ENCODE measurements at regions of chr1 and their contacts with region 1.

Region 1: DNA sequence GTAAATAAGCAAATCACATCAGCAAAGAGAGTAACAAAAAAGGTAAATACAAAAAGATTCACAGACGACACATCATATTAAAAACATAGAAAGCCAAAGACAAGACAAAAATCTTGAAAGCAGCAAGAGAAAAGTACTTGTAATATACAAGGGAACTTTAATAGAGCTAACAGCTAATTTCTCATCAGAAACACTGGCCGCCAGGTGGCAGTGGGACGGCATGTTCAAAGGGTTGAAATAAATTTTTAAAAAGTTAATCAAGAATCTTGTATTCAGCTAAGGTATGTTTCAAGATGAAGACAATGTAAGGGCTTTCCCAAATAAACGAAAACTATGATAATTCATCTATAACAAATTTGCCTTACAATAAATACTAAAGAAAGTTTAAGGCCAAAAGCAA is 358.1 kb downstream of the LRRIQ3 start:
- DNase-seq: no peak
- ATAC-seq: peak; percentile 32; the same call in 1 of the 3 replicates
- H3K4me3 ChIP-seq: no peak overlapping the region
- H3K27ac ChIP-seq: no peak overlapping the region
- H3K4me1 ChIP-seq: no peaks in the 10 kb centered on the region
- H3K27me3 ChIP-seq: no peaks in the 10 kb centered on the region
- CTCF ChIP-seq: peak; percentile 23 to 51 (median 35); a peak in 5 of 6 replicates
- EP300 ChIP-seq: no peak
- POLR2A ChIP-seq: no peak
- RAD21 ChIP-seq: peak; percentile 48; the same call in 1 of the 2 replicates

Region 2: DNA sequence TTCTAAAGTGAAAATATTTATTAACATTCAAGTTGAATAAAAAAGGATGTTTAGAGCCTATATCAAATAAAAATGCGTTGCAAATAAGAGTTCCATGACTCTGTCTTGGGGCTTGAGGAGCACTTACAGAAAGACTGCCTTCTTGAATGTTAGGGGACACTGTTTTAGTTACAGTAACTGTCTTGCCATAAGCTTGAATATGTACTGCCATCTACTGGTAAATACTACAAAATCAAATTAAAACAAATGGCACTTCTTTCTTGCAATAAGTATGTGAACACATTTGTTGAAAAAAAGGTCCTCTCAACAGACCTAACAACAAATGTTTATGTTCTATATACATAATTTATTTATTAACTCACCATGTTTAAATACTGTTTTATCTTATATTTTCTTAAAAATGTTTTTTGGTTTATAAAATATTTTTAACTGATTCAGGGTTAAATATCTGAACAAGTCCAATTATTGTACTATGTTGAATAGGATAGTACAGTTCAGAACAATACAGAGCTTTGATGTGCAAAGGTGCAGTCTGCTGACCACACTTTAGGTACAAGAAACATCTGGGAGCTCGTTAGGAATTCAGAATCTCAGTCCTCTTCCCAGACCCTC is 158.5 kb after region 1 on chr1:
- CTCF ChIA-PET with region 1: interaction called, 55 read pairs
- POLR2A ChIA-PET with region 1: no interaction called
- RAD21 ChIA-PET with region 1: interaction called, 14 read pairs
- SMC1A ChIA-PET with region 1: interaction called, 41 read pairs
- in situ Hi-C with region 1: loop called (anchors 10 kb)
- intact Hi-C with region 1: loop called (anchors 1 kb)
- DNase-seq: peak; percentile 1
- ATAC-seq: peak; percentile 63
- H3K4me3 ChIP-seq: no peak overlapping the region
- H3K27ac ChIP-seq: no peak overlapping the region
- H3K4me1 ChIP-seq: no peaks in the 10 kb centered on the region
- H3K27me3 ChIP-seq: no peaks in the 10 kb centered on the region
- CTCF ChIP-seq: peak in 2 of 3 experiments; percentile 31 to 56; a peak in 3 of 6 replicates
- EP300 ChIP-seq: no peak
- POLR2A ChIP-seq: no peak
- RAD21 ChIP-seq: peak; percentile 69

Region 3: GRCh38 chr1:74003806-74004205 is 163.9 kb after region 1 on chr1:
- CTCF ChIA-PET with region 1: interaction called, 55 read pairs
- POLR2A ChIA-PET with region 1: no interaction called
- RAD21 ChIA-PET with region 1: interaction called, 14 read pairs
- SMC1A ChIA-PET with region 1: interaction called, 41 read pairs
- in situ Hi-C with region 1: loop called (anchors 10 kb)
- intact Hi-C with region 1: no loop called
- DNase-seq: no peak
- ATAC-seq: no peak
- H3K4me3 ChIP-seq: no peak overlapping the region
- H3K27ac ChIP-seq: no peak overlapping the region
- H3K4me1 ChIP-seq: no peaks in the 10 kb centered on the region
- H3K27me3 ChIP-seq: no peaks in the 10 kb centered on the region
- CTCF ChIP-seq: no peak
- EP300 ChIP-seq: no peak
- POLR2A ChIP-seq: no peak
- RAD21 ChIP-seq: no peak

Region 4: DNA sequence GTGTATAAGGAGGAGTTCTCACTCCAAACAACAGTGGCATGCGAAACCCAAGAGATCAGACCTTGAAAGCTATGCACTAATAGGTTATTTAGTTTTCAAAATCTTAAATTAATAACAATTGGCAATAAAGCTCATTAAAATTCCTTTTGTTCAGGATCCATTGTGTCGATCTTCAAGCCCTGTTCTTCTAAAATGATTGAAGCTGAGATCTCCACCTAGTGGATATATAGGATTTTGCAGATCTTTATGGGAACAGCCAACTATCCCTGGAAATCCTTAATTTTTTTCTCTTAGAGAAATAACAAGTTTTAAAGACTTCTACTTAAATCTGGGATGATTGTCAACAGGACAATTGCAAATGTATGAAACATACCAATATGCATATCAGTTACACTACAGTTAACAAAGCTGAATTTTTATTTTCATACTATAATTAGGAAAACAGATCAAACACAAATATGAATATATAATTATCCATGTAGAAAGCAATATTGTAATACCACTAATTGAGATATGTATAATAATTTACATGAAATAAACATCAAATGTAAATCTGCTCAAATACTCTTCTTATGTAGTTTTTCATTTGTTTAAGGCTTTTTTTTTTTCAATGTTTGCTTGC is 629.2 kb after region 1 on chr1:
- CTCF ChIA-PET with region 1: interaction called, 7 read pairs
- POLR2A ChIA-PET with region 1: no interaction called
- RAD21 ChIA-PET with region 1: interaction called, 7 read pairs
- SMC1A ChIA-PET with region 1: interaction called, 7 read pairs
- in situ Hi-C with region 1: loop called (anchors 25 kb)
- intact Hi-C with region 1: loop called (anchors 10 kb)
- DNase-seq: no peak
- ATAC-seq: 0 out of 3 replicates have a peak, but pooled peaks have one; percentile 44
- H3K4me3 ChIP-seq: no peak overlapping the region
- H3K27ac ChIP-seq: no peak overlapping the region
- H3K4me1 ChIP-seq: no peaks in the 10 kb centered on the region
- H3K27me3 ChIP-seq: no peaks in the 10 kb centered on the region
- CTCF ChIP-seq: peak; percentile 43 to 52 (median 48); a peak in 5 of 6 replicates
- EP300 ChIP-seq: no peak
- POLR2A ChIP-seq: no peak
- RAD21 ChIP-seq: peak; percentile 66

Region 5: GRCh38 chr1:74504125-74504932 is 664.4 kb after region 1 on chr1:
- CTCF ChIA-PET with region 1: interaction called, 4 read pairs
- POLR2A ChIA-PET with region 1: no interaction called
- RAD21 ChIA-PET with region 1: no interaction called
- SMC1A ChIA-PET with region 1: interaction called, 3 read pairs
- in situ Hi-C with region 1: no loop called
- intact Hi-C with region 1: loop called (anchors 10 kb)
- DNase-seq: peak; percentile 33
- ATAC-seq: peak; percentile 99
- H3K4me3 ChIP-seq: no peak overlapping the region
- H3K27ac ChIP-seq: no peak overlapping the region
- H3K4me1 ChIP-seq: no peaks in the 10 kb centered on the region
- H3K27me3 ChIP-seq: no peaks in the 10 kb centered on the region
- CTCF ChIP-seq: peak; percentile 82 to 89 (median 88)
- EP300 ChIP-seq: no peak
- POLR2A ChIP-seq: no peak
- RAD21 ChIP-seq: peak; percentile 74

Measured in GM12878 (cell line).